ENCODE measurements at regions of chr19 and their contacts with region 1.

Region 1: DNA sequence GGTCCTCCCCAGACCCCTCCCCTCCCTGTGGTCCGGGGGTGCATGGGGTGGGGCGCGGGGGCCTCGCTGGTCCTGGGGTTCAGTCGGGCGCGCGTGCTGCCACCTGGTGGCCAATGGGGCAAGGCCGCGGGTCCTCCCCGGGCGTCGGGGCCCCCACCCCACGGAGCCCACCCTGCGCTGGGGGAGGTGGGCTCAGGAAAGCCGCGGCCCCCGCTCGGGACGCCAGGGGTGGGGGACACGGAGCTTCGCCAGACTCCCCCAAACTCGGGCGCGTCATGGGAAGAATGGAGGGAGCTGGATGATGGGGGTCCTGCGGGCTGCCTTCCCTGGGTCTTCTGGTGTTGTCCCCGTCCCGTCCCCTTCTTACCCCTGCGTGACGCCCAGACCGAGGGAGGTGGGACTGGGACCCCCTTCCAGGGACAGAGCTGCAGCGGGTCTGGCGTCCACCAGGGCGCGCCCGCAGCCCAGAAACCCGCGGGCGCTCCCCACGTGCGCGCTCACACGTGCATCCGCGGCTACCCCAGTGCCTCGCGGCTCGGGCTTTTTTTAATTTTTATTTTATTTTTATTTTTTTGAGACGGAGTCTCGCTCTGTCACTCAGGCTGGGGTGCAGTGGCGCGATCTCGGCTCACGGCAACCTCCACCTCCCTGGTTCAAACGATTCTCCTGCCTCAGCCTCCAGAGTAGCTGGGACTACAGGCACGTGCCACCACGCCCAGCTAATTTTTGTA is 19.8 kb upstream of the TCF3 start:
- DNase-seq: peak; percentile 88
- H3K4me3 Mint-ChIP-seq: peak overlapping the region; percentile 59
- H3K27ac Mint-ChIP-seq: no peak overlapping the region
- H3K4me1 Mint-ChIP-seq: peaks cover 9% of the 10 kb centered on the region
- H3K27me3 Mint-ChIP-seq: peaks cover 54% of the 10 kb centered on the region

Region 2: GRCh38 chr19:1551068-1552040 is 120.8 kb before region 1 on chr19:
- intact Hi-C with region 1: loop called (anchors 1 kb)
- DNase-seq: no peak
- H3K4me3 Mint-ChIP-seq: no peak overlapping the region
- H3K27ac Mint-ChIP-seq: no peak overlapping the region
- H3K4me1 Mint-ChIP-seq: peaks cover under 1% of the 10 kb centered on the region
- H3K27me3 Mint-ChIP-seq: no peaks in the 10 kb centered on the region

Region 3: DNA sequence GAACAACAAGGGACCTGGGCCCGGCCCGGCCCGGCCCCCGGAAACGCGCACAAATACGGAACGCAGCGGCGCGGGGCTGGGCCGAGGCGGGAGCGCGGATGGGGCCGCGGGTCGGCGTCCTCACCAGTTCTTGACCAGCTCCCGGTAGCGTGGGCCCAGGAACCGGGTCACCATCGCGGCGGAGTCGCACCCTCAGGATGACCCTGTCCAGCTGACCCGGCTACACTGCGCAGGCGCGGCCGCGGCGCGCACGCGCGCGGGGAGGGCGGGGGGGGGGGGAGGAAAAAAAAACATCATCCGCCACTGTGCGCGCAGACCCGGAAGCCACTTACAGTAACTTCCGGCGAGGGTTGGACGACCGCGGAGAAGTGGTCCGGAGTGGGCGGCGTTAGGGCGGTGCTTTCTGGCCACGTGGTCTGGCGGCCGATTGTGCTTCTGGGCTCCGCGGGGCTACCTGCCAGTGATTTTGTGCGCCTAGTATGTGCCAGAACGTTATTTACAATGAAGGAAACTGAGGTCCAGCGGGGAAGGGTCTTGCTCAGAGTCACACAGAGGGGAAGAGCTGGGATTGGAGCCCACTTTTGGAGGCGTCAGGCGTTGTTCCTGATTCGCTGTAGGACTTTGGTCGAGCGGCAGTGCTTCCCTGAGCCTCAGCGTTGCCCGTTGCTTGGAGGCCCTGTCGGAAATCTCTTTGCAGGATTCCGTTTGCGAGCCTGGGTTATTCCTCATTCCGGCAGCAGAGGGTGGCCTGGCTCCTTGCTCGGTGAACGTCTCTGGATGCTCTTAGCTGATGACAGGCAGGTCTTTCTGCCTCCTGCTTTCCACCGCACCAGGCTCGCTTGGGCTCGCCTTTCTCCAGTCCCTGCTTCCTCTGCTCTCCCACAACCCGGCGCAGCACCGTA is 66.7 kb before region 1 on chr19 and contains the start of gene UQCR11:
- intact Hi-C with region 1: loop called (anchors 5 kb)
- DNase-seq: peak; percentile 98
- H3K4me3 Mint-ChIP-seq: peak within 1 kb of the TSS; percentile 95
- H3K27ac Mint-ChIP-seq: peak within 1 kb of the TSS; percentile 99
- H3K4me1 Mint-ChIP-seq: peaks cover 24% of the 10 kb centered on the region
- H3K27me3 Mint-ChIP-seq: no peaks in the 10 kb centered on the region
- total RNA-seq, gene UQCR11: 194 and 195 TPM in 2 replicates

Region 4: GRCh38 chr19:1848399-1849131 is 176.4 kb after region 1 on chr19 and contains the start of gene REXO1:
- intact Hi-C with region 1: no loop called
- DNase-seq: peak; percentile 99
- H3K4me3 Mint-ChIP-seq: peak within 1 kb of the TSS; percentile 91
- H3K27ac Mint-ChIP-seq: peak within 1 kb of the TSS; percentile 89
- H3K4me1 Mint-ChIP-seq: peaks cover 41% of the 10 kb centered on the region
- H3K27me3 Mint-ChIP-seq: no peaks in the 10 kb centered on the region
- total RNA-seq, gene REXO1: 56.3 and 61.4 TPM in 2 replicates

Region 5: GRCh38 chr19:1901940-1902441 is 229.8 kb after region 1 on chr19:
- intact Hi-C with region 1: no loop called
- DNase-seq: no peak
- H3K4me3 Mint-ChIP-seq: no peak overlapping the region
- H3K27ac Mint-ChIP-seq: no peak overlapping the region
- H3K4me1 Mint-ChIP-seq: peaks cover 33% of the 10 kb centered on the region
- H3K27me3 Mint-ChIP-seq: no peaks in the 10 kb centered on the region

Region 6: DNA sequence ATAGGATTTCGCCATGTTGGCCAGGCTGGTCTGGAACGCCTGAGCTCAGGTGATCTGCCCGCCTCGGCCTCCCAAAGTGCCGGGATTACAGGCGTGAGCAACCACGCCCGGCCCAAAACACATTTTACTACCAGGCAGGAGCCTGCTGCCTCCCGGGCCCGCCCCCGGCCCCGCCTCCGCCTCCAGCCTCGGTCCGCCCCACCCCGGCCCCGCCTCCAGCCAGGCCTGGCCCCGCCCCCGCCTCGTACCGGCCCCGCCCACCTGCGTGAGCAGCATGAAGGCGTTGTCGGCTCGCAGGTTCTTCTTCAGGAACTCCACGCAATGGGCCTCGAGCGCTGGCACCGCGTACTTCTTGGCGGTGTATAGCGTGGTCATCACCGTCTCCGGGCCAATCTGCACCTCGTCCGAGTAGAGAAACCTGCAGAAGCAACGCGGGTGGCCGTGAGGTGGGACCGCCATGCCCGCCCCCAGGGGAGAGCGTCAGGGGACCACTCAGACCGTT is 320.6 kb after region 1 on chr19:
- intact Hi-C with region 1: no loop called
- DNase-seq: no peak
- H3K4me3 Mint-ChIP-seq: no peak overlapping the region
- H3K27ac Mint-ChIP-seq: no peak overlapping the region
- H3K4me1 Mint-ChIP-seq: no peaks in the 10 kb centered on the region
- H3K27me3 Mint-ChIP-seq: no peaks in the 10 kb centered on the region